ENCODE measurements at regions of chr16 and their contacts with region 1.

Region 1: DNA sequence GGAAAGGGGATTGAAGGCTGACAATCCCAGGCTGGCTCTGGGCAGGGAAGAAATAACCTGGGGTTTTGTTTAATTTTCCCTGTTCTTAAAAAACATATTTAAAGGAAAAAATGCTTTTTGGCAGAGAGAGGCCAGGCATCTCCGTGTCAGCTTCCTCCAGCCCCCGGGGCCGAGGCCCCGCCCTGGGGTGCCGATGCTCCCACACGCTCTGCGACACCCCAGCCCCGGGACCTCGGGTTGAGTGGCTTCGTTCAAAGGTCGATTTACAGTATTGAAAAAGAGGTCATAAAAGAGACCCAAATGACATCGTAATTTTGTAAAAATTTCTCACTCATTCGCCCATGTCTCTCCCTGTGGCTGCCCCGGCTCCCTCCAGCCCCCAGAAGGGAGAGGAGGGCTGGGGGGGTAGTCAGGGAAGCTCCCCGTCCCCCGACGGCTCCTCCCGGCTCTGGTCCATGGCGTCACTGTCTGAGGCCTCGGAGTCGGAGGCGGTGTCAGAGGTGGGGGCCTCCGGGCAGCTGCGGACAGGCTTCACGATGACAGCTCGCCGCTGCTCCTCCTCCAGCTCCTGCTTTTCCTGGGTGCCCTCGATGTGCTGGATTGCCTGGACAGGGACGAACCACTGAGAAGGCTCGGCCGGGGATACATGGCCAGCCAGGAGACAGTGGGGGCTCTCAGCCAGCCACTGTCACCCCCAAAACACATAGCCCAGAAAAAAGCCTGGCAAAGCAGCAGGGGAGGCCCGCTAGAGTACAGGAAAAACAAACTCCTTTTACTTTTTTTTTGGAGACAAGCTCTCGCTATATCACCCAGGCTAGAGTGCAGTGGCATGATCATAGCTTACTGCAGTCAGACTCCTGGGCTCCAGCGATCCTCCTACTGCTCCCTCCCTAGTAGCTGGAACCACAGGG is 14.9 kb downstream of the TFAP4 start:
- DNase-seq: no peak
- H3K4me3 ChIP-seq: no peak overlapping the region
- H3K27ac ChIP-seq: no peak overlapping the region
- H3K4me1 ChIP-seq: peaks cover 3% of the 10 kb centered on the region in 2 donors
- H3K27me3 ChIP-seq: no peaks in the 10 kb centered on the region
- CTCF ChIP-seq: no peak
- POLR2A ChIP-seq: no peak

Region 2: GRCh38 chr16:4010225-4011158 is 247.4 kb before region 1 on chr16:
- intact Hi-C with region 1: no loop called
- DNase-seq: no peak
- H3K4me3 ChIP-seq: no peak overlapping the region
- H3K27ac ChIP-seq: peak overlapping the region in 2 of 3 donors; percentile 43 to 52
- H3K4me1 ChIP-seq: peaks cover 14 to 23% of the 10 kb centered on the region in 2 donors
- H3K27me3 ChIP-seq: no peaks in the 10 kb centered on the region
- CTCF ChIP-seq: no peak
- POLR2A ChIP-seq: no peak

Region 3: GRCh38 chr16:4200000-4200780 is 57.7 kb before region 1 on chr16:
- intact Hi-C with region 1: loop called (anchors 5 kb)
- DNase-seq: peak; percentile 87 to 90
- H3K4me3 ChIP-seq: no peak overlapping the region
- H3K27ac ChIP-seq: peak overlapping the region in 1 of 3 donors; percentile 58
- H3K4me1 ChIP-seq: peaks cover 0 to 14% of the 10 kb centered on the region in 2 donors
- H3K27me3 ChIP-seq: no peaks in the 10 kb centered on the region
- CTCF ChIP-seq: peak; percentile 66 to 96 (median 91)
- POLR2A ChIP-seq: no peak

Region 4: GRCh38 chr16:4487955-4488498 is 230.1 kb after region 1 on chr16:
- intact Hi-C with region 1: no loop called
- DNase-seq: no peak
- H3K4me3 ChIP-seq: no peak overlapping the region
- H3K27ac ChIP-seq: peak overlapping the region in 2 of 3 donors; percentile 6 to 10
- H3K4me1 ChIP-seq: peaks cover 0 to 32% of the 10 kb centered on the region in 2 donors
- H3K27me3 ChIP-seq: no peaks in the 10 kb centered on the region
- CTCF ChIP-seq: no peak
- POLR2A ChIP-seq: no peak

Measured in thyroid gland (tissue), 4 donors.